ENCODE measurements at regions of chr6 and their contacts with region 1.

Region 1: DNA sequence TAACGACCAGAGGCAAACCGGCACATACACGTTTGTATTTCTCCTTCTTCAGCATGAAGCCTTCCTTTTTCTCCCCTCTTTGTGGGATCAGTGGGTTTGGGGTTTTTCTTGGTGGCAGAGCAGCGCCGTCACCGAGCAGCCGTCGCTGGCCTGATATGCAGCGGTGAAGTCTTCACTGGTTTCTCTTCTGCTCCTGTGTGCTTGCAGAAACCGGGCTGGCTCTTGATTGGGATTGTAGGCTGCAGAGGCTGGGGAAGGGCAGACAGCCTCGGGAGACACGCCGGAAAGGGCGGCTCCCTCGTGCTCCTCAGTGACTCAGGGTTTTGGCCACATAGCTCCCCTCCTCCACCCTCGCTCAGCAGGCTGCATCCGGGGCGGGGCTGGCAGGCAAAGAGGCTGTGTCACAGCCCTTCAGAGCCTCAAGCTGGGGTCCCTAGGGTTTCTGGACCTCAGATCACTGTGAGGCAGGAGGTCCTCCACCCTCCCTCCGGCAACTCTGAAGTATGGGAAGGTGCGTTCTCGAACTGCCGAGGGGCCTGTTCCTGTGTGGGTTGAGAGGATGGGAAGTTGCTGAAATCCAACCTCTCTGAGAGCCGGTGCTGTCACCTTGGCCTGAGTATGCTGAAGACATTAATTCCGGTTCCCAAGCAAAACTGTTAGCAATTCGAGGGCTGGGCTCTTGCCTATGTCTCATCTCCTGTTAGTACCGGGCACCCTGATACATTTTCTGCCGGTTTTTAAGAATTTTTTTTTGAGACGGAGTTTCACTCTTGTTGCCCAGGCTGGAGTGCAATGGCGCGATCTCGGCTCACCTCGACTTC is 24.2 kb downstream of the NQO2 start:
- DNase-seq: peak; percentile 88
- ATAC-seq: peak; percentile 85
- H3K4me3 Mint-ChIP-seq: peak overlapping the region; percentile 90
- H3K27ac Mint-ChIP-seq: peak overlapping the region; percentile 92
- H3K4me1 Mint-ChIP-seq: peaks cover 40% of the 10 kb centered on the region
- H3K27me3 Mint-ChIP-seq: peaks cover under 1% of the 10 kb centered on the region

Region 2: DNA sequence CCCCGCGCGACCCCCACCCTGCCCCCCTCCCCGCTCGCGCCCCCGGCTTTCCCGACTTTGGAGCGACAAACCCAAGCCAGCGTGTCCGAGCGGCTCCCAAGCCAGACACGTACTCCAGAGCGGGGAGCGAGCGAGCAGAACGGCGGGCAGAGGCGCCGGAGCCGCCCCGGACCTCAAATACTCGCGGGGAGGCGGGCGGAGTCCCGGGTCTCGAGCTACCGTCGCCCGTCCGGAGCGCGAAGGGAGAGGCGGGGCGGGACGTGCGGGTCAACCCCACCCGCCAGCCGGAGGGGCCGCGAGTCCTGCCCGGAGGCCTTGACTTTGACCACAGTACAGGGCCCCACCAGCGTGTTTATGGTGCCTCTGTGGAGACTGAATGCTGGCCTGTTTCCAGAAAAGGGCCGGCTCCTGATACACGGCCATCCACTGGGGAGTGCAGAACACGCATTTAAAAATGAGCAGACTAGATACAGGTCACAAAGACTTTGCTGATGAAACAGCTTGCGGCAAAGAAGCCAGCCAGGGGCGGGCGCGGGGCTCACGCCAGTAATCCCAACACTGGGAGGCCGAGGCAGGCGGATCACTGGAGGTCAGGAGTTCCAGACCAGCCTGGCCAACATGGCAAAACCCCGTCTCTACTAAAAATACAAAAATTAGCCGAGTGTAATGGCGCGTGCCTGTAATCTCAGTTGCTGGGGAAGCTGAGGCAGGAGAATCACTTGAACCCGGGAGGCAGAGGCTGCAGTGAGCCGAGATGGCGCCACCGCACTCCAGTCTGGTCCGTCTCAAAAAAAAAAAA is 52.3 kb before region 1 on chr6 and contains the start of gene SERPINB6:
- POLR2A ChIA-PET with region 1: no interaction called
- DNase-seq: peak; percentile 72
- ATAC-seq: peak; percentile 66
- H3K4me3 Mint-ChIP-seq: peak within 1 kb of the TSS; percentile 90
- H3K27ac Mint-ChIP-seq: peak within 1 kb of the TSS; percentile 85
- H3K4me1 Mint-ChIP-seq: peaks cover 26% of the 10 kb centered on the region
- H3K27me3 Mint-ChIP-seq: peaks cover 5% of the 10 kb centered on the region
- total RNA-seq, gene SERPINB6: 85.3 to 85.6 TPM

Region 3: GRCh38 chr6:3052481-3053230 is 28.8 kb after region 1 on chr6:
- POLR2A ChIA-PET with region 1: interaction called, 20 read pairs
- DNase-seq: no peak
- ATAC-seq: no peak
- H3K4me3 Mint-ChIP-seq: peak overlapping the region; percentile 73
- H3K27ac Mint-ChIP-seq: peak overlapping the region; percentile 70
- H3K4me1 Mint-ChIP-seq: peaks cover 23% of the 10 kb centered on the region
- H3K27me3 Mint-ChIP-seq: peaks cover 23% of the 10 kb centered on the region